Heart right ventricle (tissue), 16 donors: ENCODE measurements at regions of chr3 and their contacts with region 1.

Region 1: DNA sequence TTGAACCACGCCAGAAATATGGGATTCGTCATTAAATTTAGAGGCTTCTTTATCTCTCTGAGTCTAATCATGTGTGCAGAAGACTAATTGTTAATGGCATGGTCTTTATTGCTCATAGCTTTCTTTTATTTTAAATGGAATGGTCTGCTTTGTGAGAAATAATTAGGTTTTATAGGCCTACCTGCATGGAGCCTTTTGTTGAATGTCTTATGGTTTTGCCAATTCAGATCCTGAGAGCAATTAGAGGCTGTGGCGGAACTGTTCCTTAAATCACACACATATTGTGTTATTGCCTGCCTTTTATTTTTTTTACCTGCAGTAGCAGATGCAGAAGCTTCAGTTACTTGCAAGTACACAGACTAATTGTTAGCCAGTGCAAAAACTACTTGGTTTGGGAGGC is 306.2 kb downstream of the NLGN1 start:
- DNase-seq: no peak
- ATAC-seq: no peak
- H3K4me3 ChIP-seq: no peak overlapping the region
- H3K27ac ChIP-seq: no peak overlapping the region
- H3K4me1 ChIP-seq: no peaks in the 10 kb centered on the region
- H3K27me3 ChIP-seq: no peaks in the 10 kb centered on the region
- CTCF ChIP-seq: no peak

Region 2: DNA sequence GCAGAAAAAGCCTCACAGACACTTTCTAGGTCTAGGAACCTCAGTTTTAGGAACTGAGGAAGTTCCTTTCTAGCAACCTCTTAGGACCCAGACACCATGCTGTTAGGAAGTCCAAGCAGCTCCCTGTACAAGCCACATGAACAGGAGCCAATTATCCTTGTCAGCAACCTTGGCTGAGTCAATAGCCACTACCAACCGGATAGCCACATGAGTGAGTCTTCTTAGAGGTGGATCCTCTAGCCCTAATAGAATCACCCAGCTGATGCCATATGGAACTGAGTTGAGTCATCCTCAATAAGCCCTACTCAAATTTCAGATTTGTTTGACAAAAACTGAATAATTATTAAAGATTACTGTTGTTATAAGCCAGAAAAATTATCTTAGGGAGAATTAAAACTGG is 50.0 kb before region 1 on chr3:
- intact Hi-C with region 1: loop called in 1 of 10 experiments (anchors 2 kb)
- DNase-seq: no peak
- ATAC-seq: no peak
- H3K4me3 ChIP-seq: no peak overlapping the region
- H3K27ac ChIP-seq: no peak overlapping the region
- H3K4me1 ChIP-seq: no peaks in the 10 kb centered on the region
- H3K27me3 ChIP-seq: no peaks in the 10 kb centered on the region
- CTCF ChIP-seq: no peak

Region 3: GRCh38 chr3:173660645-173661615 is 42.8 kb before region 1 on chr3:
- intact Hi-C with region 1: loop called in 1 of 10 experiments (anchors 1 kb)
- DNase-seq: no peak
- ATAC-seq: peak in 4 of 8 donors; percentile 75 to 84 (median 78)
- H3K4me3 ChIP-seq: no peak overlapping the region
- H3K27ac ChIP-seq: peak overlapping the region in 5 of 10 donors; percentile 30 to 61 (median 40)
- H3K4me1 ChIP-seq: peaks cover 0 to 20% (median 0%) of the 10 kb centered on the region in 9 donors
- H3K27me3 ChIP-seq: no peaks in the 10 kb centered on the region
- CTCF ChIP-seq: no peak